Natural killer cell (primary cell): ENCODE measurements at regions of chr1 and their contacts with region 1.

Region 1: GRCh38 chr1:8211589-8212442 is 106.1 kb upstream of the SLC45A1 start:
- DNase-seq: no peak
- ATAC-seq: no peak
- H3K4me3 ChIP-seq: no peak overlapping the region
- H3K4me3 Mint-ChIP-seq: peak overlapping the region; percentile 59
- H3K27ac ChIP-seq: no peak overlapping the region
- H3K27ac Mint-ChIP-seq: peak overlapping the region in 1 of 2 donors; percentile 52
- H3K4me1 ChIP-seq: peaks cover 4% of the 10 kb centered on the region
- H3K4me1 Mint-ChIP-seq: peaks cover 12 to 18% of the 10 kb centered on the region in 2 donors
- H3K27me3 ChIP-seq: peaks cover 4% of the 10 kb centered on the region
- H3K27me3 Mint-ChIP-seq: peaks cover 31 to 43% of the 10 kb centered on the region in 2 donors
- CTCF ChIP-seq: no peak

Region 2: GRCh38 chr1:8116893-8117264 is 94.9 kb before region 1 on chr1:
- intact Hi-C with region 1: loop called (anchors 10 kb)
- DNase-seq: no peak
- ATAC-seq: no peak
- H3K4me3 ChIP-seq: no peak overlapping the region
- H3K4me3 Mint-ChIP-seq: no peak overlapping the region
- H3K27ac ChIP-seq: no peak overlapping the region
- H3K27ac Mint-ChIP-seq: no peak overlapping the region
- H3K4me1 ChIP-seq: peaks cover 25% of the 10 kb centered on the region
- H3K4me1 Mint-ChIP-seq: peaks cover 29 to 44% of the 10 kb centered on the region in 2 donors
- H3K27me3 ChIP-seq: no peaks in the 10 kb centered on the region
- H3K27me3 Mint-ChIP-seq: peaks cover 10 to 21% of the 10 kb centered on the region in 2 donors
- CTCF ChIP-seq: no peak